Right ventricle myocardium inferior (tissue), 1 donor: ENCODE measurements at regions of chr11 and their contacts with region 1.

Region 1: GRCh38 chr11:65314501-65315203 is at the start of gene CDC42EP2:
- DNase-seq: peak; percentile 94
- ATAC-seq: peak; percentile 92
- total RNA-seq, gene CDC42EP2: 16.7 TPM

Region 2: GRCh38 chr11:65274735-65275682 is 39.6 kb before region 1 on chr11:
- intact Hi-C with region 1: loop called (anchors 1 kb)
- DNase-seq: peak; percentile 79
- ATAC-seq: peak; percentile 92

Region 3: DNA sequence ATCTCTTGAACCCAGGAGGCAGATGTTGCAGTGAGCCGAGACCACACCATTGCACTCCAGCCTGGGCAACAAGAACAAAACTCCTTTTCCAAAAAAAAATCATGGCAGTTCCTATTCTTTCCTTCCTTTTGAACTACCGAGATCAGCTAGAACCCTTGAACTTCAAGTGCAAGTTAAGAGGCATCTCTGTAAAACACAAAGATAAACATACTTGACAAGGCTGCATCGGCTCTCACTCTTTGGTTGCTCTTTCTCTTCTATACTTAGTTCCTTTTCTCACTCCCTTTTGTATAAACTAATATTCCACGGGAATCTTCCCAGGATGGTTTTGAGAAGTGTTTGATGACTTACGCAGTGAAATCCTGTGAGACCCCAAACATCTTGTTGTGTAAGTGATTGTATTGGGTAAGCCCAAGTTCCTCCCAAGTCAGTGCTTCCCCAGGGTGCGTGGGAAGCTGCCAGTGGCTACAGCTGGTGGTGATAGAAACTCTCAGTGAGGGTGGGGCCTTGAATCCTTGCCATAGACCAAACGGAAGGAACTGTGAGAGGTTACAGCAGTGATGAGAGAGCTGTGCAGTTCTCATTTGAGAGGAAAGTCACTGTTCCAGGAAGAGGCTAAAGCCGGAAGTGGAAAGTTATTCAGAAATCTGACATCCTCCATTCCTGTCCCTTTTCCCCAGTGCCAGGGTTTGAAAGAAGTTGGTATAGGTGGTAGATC is 24.0 kb before region 1 on chr11:
- intact Hi-C with region 1: loop called (anchors 2 kb)
- DNase-seq: peak; percentile 96
- ATAC-seq: peak; percentile 86

Region 4: DNA sequence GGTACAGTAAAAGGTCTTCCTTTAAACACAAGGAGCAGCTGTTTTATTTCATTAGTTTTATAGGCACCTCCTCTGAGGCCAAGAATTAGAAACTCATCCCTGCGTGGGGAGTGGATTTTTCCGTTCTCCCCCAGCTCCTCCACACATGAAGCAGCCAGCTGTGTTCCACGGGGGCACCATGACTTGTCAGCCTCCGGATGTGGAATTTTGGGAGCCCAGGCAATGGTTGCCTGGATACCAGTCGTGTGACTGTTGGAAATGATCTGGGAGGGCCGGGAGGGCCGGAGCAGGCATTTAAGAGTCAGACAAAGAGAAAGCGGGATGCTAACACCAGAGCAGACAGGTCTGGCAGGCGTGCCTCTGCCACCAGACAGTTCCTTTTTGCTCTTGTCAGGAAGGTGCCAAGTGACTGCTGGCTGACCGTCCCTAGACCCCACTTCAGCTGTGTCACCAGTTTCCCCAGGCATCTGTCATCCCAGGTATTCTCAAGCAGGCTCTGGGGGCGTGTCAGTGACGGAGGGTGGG is 15.9 kb before region 1 on chr11:
- intact Hi-C with region 1: loop called (anchors 2 kb)
- DNase-seq: peak; percentile 84
- ATAC-seq: peak; percentile 45

Region 5: DNA sequence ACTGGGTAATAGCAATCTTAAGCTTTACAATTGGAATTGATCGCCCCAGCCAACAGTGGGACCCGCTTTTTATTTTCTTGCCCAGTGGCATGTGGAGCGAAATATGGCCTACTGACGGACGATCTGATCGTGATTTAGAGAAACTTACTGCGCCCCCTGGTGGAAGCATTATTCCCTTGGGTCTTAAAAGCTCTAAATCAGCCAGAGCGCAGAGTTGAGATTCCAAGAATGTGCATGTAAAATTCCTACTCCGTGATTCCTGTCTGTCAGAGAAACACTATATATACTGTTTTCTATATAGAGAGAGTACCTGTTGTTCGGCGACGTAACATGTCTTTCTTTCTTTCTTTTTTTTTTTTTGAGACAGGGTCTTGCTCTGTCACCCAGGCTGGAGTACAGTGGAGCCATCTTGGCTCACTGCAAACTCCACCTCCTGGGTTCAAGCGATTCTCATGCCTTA is 15.3 kb after region 1 on chr11:
- intact Hi-C with region 1: loop called (anchors 2 kb)
- DNase-seq: no peak
- ATAC-seq: peak; percentile 30